Activated CD4-positive, alpha-beta T cell treated with anti-CD3 and anti-CD28 coated beads for 36 hours (primary cell): ENCODE measurements at regions of chr20 and their contacts with region 1.

Region 1: GRCh38 chr20:33992923-33993575 is 662 bp upstream of the RALY start:
- DNase-seq: peak; percentile 100
- ATAC-seq: peak; percentile 87
- H3K4me3 Mint-ChIP-seq: peak overlapping the region; percentile 97
- H3K27ac Mint-ChIP-seq: peak overlapping the region; percentile 97
- H3K4me1 Mint-ChIP-seq: peaks cover 50% of the 10 kb centered on the region
- H3K27me3 Mint-ChIP-seq: no peaks in the 10 kb centered on the region

Region 2: DNA sequence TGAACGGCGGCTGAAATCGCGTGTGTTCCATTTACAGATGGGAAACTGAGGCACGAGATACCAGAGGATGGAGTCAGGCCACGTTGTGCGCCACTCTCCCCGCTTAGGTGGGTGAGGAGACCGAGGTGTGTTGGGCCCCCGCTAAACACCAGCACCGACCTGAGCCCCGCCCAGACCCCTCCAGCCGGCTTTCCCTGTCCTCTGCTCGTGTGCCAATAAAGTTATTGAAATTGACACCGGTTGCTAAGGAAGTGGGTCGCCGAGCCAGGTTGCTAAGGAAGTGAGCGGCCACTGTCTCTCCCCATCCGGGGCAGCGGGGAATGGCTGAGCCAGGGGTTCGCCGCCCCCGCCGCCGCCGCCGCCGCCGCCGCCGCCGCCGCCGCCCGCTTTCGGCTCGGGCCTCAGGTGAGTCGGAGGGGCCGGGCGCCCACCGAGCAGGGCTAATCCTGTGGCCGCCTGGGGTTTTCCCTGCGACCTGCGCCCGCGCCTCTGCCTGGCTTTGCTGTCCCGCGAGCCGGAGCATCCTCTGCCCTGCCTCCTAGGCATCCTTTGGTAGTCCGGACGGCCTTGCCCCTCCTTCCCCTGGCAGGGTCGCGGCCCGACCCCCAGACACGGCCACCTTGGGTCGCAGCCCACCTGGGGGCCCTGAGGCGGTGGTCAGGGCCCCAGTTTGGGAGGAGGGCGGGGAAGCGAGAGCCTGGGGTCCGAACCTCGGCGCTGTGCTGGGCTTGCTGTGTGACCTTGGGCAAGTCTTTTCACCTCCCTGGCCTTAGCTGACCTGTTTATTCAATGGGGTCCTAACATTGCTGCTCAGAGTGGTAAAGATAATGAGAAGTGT is 1715.5 kb before region 1 on chr20 and contains the start of gene KIF3B:
- CTCF ChIA-PET with region 1: no interaction called
- POLR2A ChIA-PET with region 1: no interaction called
- intact Hi-C with region 1: loop called in 1 of 2 experiments (anchors 5 kb)
- DNase-seq: peak; percentile 93
- ATAC-seq: peak; percentile 81
- H3K4me3 Mint-ChIP-seq: peak within 1 kb of the TSS; percentile 91
- H3K27ac Mint-ChIP-seq: peak within 1 kb of the TSS; percentile 98
- H3K4me1 Mint-ChIP-seq: peaks cover 58% of the 10 kb centered on the region
- H3K27me3 Mint-ChIP-seq: no peaks in the 10 kb centered on the region
- total RNA-seq, gene KIF3B: 39.9 to 40.7 TPM

Region 3: DNA sequence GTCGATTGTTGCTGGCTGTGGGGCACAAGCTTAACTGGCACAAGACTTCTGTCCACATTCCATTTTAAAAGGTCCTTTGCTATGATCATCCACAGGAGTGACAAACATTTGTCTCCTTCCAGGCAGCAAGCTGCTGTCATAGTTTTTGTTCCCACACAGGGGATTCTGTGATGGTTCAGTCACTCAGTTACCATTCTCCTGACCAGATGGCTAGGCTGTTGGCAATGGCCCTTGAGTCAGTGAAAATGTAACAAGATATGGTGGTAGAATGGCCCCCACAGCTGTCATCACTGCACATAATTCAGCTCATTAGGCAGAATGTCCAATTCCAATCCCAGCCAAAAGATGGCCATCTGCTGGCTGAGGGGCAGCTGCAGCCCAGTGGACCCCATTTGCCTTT is 743.6 kb before region 1 on chr20:
- CTCF ChIA-PET with region 1: no interaction called
- POLR2A ChIA-PET with region 1: no interaction called
- intact Hi-C with region 1: no loop called
- DNase-seq: no peak
- ATAC-seq: no peak
- H3K4me3 Mint-ChIP-seq: no peak overlapping the region
- H3K27ac Mint-ChIP-seq: no peak overlapping the region
- H3K4me1 Mint-ChIP-seq: no peaks in the 10 kb centered on the region
- H3K27me3 Mint-ChIP-seq: no peaks in the 10 kb centered on the region

Region 4: GRCh38 chr20:33305589-33306057 is 687.4 kb before region 1 on chr20:
- CTCF ChIA-PET with region 1: no interaction called
- POLR2A ChIA-PET with region 1: no interaction called
- intact Hi-C with region 1: no loop called
- DNase-seq: no peak
- ATAC-seq: no peak
- H3K4me3 Mint-ChIP-seq: no peak overlapping the region
- H3K27ac Mint-ChIP-seq: no peak overlapping the region
- H3K4me1 Mint-ChIP-seq: no peaks in the 10 kb centered on the region
- H3K27me3 Mint-ChIP-seq: no peaks in the 10 kb centered on the region

Region 5: DNA sequence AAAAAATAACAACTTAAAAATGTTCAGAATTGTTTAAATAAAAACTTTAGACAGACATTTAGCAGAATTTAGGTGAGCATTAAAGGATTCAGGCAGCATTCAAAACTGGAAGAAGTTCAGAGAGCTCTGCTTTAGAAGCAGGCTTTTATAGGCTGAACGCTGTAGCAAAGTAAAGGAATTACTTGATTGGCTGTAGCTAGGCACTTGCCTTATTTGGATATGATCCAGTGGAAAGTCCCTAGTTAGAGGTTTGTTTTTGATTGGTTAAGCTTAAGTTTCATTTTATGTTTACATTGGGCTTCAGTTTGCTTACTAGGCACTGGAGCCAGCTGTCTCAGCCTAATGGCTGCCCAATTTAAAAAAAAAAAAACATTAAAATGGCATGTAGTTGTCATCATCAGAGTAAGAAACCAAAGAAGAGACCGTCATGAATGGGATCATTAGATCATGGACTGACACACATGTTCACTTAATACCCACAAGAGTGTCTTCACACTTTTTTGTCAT is 438.1 kb before region 1 on chr20:
- CTCF ChIA-PET with region 1: no interaction called
- POLR2A ChIA-PET with region 1: interaction called, 4 read pairs
- intact Hi-C with region 1: loop called in 1 of 2 experiments (anchors 2 kb)
- DNase-seq: peak; percentile 44
- ATAC-seq: peak; percentile 99
- H3K4me3 Mint-ChIP-seq: no peak overlapping the region
- H3K27ac Mint-ChIP-seq: peak overlapping the region; percentile 77
- H3K4me1 Mint-ChIP-seq: peaks cover 30% of the 10 kb centered on the region
- H3K27me3 Mint-ChIP-seq: no peaks in the 10 kb centered on the region

Region 6: GRCh38 chr20:33810885-33811777 is 181.9 kb before region 1 on chr20 and contains the start of gene CHMP4B:
- CTCF ChIA-PET with region 1: no interaction called
- POLR2A ChIA-PET with region 1: interaction called, 10 read pairs
- intact Hi-C with region 1: loop called (anchors 1 kb)
- DNase-seq: peak; percentile 99
- ATAC-seq: peak; percentile 93
- H3K4me3 Mint-ChIP-seq: peak within 1 kb of the TSS; percentile 83
- H3K27ac Mint-ChIP-seq: peak within 1 kb of the TSS; percentile 89
- H3K4me1 Mint-ChIP-seq: peaks cover 36% of the 10 kb centered on the region
- H3K27me3 Mint-ChIP-seq: no peaks in the 10 kb centered on the region
- total RNA-seq, gene CHMP4B: 86.0 to 94.1 TPM

Region 7: GRCh38 chr20:33846291-33846935 is 146.6 kb before region 1 on chr20:
- CTCF ChIA-PET with region 1: no interaction called
- POLR2A ChIA-PET with region 1: no interaction called
- intact Hi-C with region 1: no loop called
- DNase-seq: no peak
- ATAC-seq: no peak
- H3K4me3 Mint-ChIP-seq: no peak overlapping the region
- H3K27ac Mint-ChIP-seq: peak overlapping the region; percentile 38
- H3K4me1 Mint-ChIP-seq: peaks cover 81% of the 10 kb centered on the region
- H3K27me3 Mint-ChIP-seq: no peaks in the 10 kb centered on the region

Region 8: DNA sequence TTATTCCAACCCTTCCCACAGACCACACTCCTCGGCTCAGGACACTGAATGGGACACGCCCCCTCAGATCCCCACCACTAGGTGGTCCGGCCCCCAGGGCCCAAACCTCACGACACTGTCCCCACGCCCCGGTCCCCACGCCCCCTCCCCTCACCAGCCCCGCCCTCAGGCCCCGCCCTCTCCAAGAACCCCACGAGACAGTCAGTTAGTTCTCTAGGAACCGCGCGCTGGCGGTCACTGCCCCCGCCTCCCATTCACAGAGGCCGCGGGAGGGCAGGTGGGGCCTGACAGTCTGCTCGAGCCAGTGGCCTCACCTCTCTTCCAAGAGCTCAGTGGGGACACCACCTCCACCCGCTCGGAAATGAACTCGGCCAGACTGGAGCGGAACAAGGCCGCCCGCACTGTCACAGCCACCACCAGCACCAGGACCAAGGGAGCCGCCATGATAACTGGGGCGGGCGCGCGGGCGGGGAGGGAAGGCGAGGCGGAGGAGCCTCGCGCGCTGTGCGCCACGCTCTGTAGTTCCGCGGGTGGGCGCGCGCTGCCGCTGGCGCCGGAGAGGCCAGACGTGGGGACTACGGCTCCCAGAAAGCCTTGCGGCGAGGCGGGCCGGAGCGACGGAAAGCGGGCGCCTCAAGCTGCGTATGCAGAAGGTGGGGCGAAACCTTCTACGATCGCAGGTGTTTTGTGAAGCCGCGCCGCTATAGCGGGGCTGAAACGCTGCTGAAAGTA is 683.8 kb after region 1 on chr20 and contains the start of gene PIGU:
- CTCF ChIA-PET with region 1: no interaction called
- POLR2A ChIA-PET with region 1: no interaction called
- intact Hi-C with region 1: loop called in 1 of 2 experiments (anchors 1 kb)
- DNase-seq: peak; percentile 98
- ATAC-seq: peak; percentile 97
- H3K4me3 Mint-ChIP-seq: peak within 1 kb of the TSS; percentile 97
- H3K27ac Mint-ChIP-seq: peak within 1 kb of the TSS; percentile 96
- H3K4me1 Mint-ChIP-seq: peaks cover 34% of the 10 kb centered on the region
- H3K27me3 Mint-ChIP-seq: no peaks in the 10 kb centered on the region
- total RNA-seq, gene PIGU: 21.1 to 28.2 TPM

Region 9: DNA sequence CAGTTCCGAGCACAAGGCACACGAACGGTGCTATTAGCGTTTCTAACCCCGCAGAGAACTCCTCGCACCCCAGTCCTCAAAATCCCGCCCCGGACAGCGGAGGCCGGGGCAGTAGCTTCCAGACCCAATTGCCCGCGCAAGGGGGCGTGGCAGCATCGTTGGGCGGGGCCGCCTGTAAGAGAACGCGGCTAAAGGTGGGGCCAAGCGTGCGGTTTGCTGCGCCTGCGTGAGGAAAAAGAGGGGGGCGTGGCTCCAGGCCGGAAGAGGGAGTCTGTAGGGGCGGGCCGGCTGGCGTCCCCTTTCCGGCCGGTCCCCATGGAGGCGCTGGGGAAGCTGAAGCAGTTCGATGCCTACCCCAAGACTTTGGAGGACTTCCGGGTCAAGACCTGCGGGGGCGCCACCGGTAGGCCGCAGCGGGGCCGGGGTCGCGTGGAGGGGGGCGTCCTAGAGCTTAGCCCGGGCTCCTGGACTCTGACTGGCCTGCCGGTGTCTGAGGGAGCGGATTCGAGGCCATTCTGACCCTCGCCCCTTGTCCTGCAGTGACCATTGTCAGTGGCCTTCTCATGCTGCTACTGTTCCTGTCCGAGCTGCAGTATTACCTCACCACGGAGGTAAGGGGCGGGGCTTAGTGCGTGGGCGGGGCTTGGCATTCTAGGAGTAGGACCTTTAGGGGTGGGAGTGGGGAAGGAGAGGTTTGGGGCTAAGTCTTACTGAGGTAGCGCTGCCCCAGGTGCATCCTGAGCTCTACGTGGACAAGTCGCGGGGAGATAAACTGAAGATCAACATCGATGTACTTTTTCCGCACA is 1548.9 kb after region 1 on chr20 and contains the start of gene ERGIC3:
- CTCF ChIA-PET with region 1: no interaction called
- POLR2A ChIA-PET with region 1: no interaction called
- intact Hi-C with region 1: loop called in 1 of 2 experiments (anchors 5 kb)
- DNase-seq: peak; percentile 99
- ATAC-seq: peak; percentile 99
- H3K4me3 Mint-ChIP-seq: peak within 1 kb of the TSS; percentile 83
- H3K27ac Mint-ChIP-seq: peak within 1 kb of the TSS; percentile 83
- H3K4me1 Mint-ChIP-seq: peaks cover 15% of the 10 kb centered on the region
- H3K27me3 Mint-ChIP-seq: no peaks in the 10 kb centered on the region
- total RNA-seq, gene ERGIC3: 109 to 127 TPM